ENCODE measurements at regions of chr22 and their contacts with region 1.

Region 1: GRCh38 chr22:38755911-38756532 is at the start of gene SUN2:
- DNase-seq: peak; percentile 96
- ATAC-seq: peak; percentile 74
- H3K4me3 Mint-ChIP-seq: peak within 1 kb of the TSS; percentile 92
- H3K27ac Mint-ChIP-seq: peak within 1 kb of the TSS; percentile 94
- H3K4me1 Mint-ChIP-seq: peaks cover 58% of the 10 kb centered on the region
- H3K27me3 Mint-ChIP-seq: no peaks in the 10 kb centered on the region
- total RNA-seq, gene SUN2: 87.2 to 102 TPM

Region 2: GRCh38 chr22:38398609-38399461 is 357.2 kb before region 1 on chr22:
- CTCF ChIA-PET with region 1: no interaction called
- POLR2A ChIA-PET with region 1: no interaction called
- intact Hi-C with region 1: loop called in 1 of 2 experiments (anchors 5 kb)
- DNase-seq: peak; percentile 92
- ATAC-seq: peak; percentile 67
- H3K4me3 Mint-ChIP-seq: peak overlapping the region; percentile 72
- H3K27ac Mint-ChIP-seq: peak overlapping the region; percentile 47
- H3K4me1 Mint-ChIP-seq: peaks cover 38% of the 10 kb centered on the region
- H3K27me3 Mint-ChIP-seq: no peaks in the 10 kb centered on the region

Region 3: GRCh38 chr22:38724926-38725571 is 31.0 kb before region 1 on chr22:
- CTCF ChIA-PET with region 1: interaction called, 10 read pairs
- POLR2A ChIA-PET with region 1: interaction called, 3 read pairs
- intact Hi-C with region 1: no loop called
- DNase-seq: peak; percentile 56
- ATAC-seq: peak; percentile 79
- H3K4me3 Mint-ChIP-seq: no peak overlapping the region
- H3K27ac Mint-ChIP-seq: peak overlapping the region; percentile 51
- H3K4me1 Mint-ChIP-seq: no peaks in the 10 kb centered on the region
- H3K27me3 Mint-ChIP-seq: no peaks in the 10 kb centered on the region

Region 4: GRCh38 chr22:38766076-38766777 is 10.2 kb after region 1 on chr22:
- CTCF ChIA-PET with region 1: interaction called, 22 read pairs
- POLR2A ChIA-PET with region 1: interaction called, 3 read pairs
- intact Hi-C with region 1: no loop called
- DNase-seq: peak; percentile 60
- ATAC-seq: peak; percentile 38
- H3K4me3 Mint-ChIP-seq: no peak overlapping the region
- H3K27ac Mint-ChIP-seq: no peak overlapping the region
- H3K4me1 Mint-ChIP-seq: peaks cover 4% of the 10 kb centered on the region
- H3K27me3 Mint-ChIP-seq: no peaks in the 10 kb centered on the region

Region 5: DNA sequence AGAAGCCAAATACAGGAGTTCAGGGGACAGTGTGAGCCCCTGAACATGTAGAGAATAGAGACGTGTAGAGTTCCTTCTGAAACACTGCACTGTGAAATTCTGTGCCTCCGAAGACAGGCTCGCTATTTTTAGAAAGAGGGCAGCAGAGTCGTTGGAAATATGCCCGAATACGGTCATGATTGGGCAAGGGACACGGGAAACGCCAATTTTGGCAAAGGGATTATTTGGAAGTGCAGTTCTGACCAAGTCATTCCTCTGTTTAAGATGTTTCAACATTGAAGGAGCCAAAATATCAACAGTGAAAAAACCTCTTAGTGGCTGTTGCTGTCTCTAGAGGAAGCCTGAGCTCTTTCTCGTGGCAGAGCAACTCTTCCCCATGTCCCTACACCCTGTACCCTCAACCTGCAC is 125.4 kb after region 1 on chr22:
- CTCF ChIA-PET with region 1: no interaction called
- POLR2A ChIA-PET with region 1: no interaction called
- intact Hi-C with region 1: no loop called
- DNase-seq: no peak
- ATAC-seq: no peak
- H3K4me3 Mint-ChIP-seq: no peak overlapping the region
- H3K27ac Mint-ChIP-seq: no peak overlapping the region
- H3K4me1 Mint-ChIP-seq: peaks cover 26% of the 10 kb centered on the region
- H3K27me3 Mint-ChIP-seq: no peaks in the 10 kb centered on the region

Region 6: DNA sequence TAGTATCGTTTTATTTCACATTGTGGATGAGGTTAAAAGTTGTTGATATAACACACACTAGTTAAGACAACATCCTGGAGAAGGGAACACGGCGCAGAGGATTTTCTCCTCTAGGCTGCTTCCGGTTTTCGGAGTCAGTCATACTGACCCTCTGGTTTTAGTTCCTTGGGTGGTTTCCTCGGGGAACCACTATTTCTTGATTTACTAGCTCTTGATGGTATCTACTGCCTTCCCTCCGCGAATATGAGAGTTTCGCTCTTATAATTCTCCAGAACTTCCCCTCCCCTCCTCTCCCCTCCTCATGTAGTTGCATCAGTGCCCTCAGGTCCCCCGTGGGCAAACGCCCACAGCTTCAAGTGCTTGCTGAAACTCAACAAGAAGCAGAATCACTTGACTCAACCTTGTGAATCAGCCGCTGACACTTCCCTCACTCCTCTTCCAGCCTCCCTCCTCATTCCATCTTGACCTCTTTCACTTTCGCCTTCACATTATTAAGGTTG is 185.5 kb after region 1 on chr22:
- CTCF ChIA-PET with region 1: interaction called, 4 read pairs
- POLR2A ChIA-PET with region 1: no interaction called
- intact Hi-C with region 1: loop called in 1 of 2 experiments (anchors 2 kb)
- DNase-seq: peak; percentile 88
- ATAC-seq: peak; percentile 88
- H3K4me3 Mint-ChIP-seq: peak overlapping the region; percentile 59
- H3K27ac Mint-ChIP-seq: peak overlapping the region; percentile 87
- H3K4me1 Mint-ChIP-seq: peaks cover 42% of the 10 kb centered on the region
- H3K27me3 Mint-ChIP-seq: peaks cover 36% of the 10 kb centered on the region

Region 7: DNA sequence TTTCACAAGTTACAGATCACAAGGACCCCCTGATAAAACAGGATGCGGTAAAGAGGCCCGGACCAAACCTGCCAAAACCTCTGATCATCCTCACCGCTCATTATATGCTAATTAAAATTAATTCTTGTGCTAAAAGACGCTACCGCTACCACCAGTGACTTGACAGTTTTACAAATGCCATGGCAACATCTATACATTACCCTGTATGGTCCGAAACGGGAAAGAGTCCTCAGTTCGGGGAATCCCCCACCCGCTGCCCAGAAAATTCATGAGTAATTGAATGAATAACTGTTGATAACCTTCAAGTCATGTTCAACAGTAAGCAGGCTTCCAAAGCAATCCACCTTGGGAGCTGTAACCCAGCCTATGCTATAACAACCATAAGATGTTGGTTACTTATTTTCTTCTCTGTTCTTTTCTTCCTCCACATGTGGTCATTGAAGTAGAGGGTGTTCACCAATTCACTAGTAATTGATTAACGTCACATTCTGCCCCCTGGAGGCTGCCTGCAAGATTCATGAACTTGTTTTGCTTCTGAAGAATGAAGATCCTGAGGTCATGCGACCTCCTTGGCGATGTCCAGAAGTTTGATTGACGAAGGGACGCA is 361.7 kb after region 1 on chr22:
- CTCF ChIA-PET with region 1: interaction called, 3 read pairs
- POLR2A ChIA-PET with region 1: interaction called, 3 read pairs
- intact Hi-C with region 1: loop called in 1 of 2 experiments (anchors 5 kb)
- DNase-seq: peak; percentile 84
- ATAC-seq: peak; percentile 60
- H3K4me3 Mint-ChIP-seq: peak overlapping the region; percentile 10
- H3K27ac Mint-ChIP-seq: peak overlapping the region; percentile 86
- H3K4me1 Mint-ChIP-seq: peaks cover 54% of the 10 kb centered on the region
- H3K27me3 Mint-ChIP-seq: no peaks in the 10 kb centered on the region

Measured in activated CD4-positive, alpha-beta T cell treated with anti-CD3 and anti-CD28 coated beads for 36 hours (primary cell).